Prostate gland (tissue), 2 donors: ENCODE measurements at regions of chr16 and their contacts with region 1.

Region 1: DNA sequence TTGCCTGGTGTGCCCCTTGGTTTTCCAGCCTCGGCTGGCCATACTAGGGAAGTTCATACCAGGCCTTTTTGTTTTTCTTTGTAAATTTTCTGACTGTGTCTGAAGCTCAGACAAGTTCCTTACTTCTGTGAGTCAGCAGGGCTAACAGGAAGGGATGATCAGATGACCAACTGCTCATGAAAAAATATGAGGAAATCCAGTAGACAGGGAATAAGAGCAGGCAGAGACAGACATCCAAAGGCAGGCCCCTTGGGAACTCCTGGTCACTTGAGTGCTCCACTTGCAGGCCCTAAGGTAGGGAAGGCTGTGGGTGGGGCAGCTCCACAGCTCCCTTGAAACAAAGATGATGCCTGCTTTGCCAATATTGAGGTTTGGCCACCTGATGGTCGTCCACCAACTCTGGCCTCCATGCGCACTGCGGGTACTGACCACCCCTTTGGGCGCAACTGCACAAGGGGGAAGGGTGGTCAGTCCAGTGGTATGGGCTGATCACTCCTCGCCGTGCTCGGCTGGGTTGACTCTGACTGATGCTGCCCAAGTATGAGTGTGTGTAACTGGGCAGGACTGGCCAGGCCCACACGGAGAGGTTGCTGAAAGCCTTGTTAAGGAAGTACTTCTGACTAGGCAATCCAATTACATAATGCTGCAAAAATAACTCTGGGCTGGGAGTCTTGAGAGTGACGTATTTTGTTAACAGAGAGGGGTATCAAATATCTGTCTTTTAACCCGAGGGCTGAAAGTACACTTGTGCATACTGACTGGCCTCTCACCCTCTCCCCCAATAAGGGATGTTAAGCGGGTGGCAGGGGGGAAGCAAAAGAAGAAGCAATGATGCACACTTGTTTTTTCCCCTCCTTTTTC is 20.8 kb upstream of the ZFHX3 start:
- DNase-seq: no peak
- H3K4me3 ChIP-seq: no peak overlapping the region
- H3K27ac ChIP-seq: peak overlapping the region; percentile 72 to 79
- H3K4me1 ChIP-seq: peaks cover 8% of the 10 kb centered on the region
- H3K27me3 ChIP-seq: no peaks in the 10 kb centered on the region
- CTCF ChIP-seq: no peak
- POLR2A ChIP-seq: peak; percentile 40

Region 2: DNA sequence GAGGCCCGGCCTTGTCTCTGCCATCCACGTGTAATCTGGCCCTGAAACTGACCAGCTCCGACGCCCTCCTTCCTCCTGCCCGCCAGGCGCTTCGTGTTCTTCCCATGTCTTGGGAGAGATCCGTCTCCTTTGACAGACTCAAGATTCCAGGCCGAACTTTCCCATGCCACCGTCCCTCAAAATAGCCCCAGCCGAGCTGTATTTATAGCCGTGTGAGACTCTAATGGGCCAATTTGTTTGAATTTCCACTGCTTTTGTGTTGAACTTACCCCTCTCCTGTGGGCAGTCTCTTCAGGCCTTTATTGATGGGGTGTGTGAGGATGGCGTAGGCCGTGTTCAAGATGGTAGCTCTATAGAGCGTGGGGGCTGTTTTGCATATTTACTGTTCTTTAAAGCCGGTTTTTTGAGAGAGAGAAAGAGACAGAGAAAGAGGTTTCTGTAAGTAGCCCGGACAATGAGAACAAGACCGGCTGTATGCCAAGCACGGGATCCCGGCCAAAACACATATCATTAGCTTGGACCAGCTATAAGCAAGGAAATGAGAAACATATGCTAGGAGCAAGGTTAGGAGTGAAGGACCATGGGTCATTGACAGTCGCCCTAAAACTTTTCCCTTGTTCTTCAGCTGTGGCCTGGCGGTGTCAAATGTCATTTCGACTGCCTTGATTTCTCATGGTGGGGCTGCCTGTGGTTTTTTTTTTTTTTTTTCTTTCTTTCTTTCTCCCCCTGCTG is 103.6 kb after region 1 on chr16:
- intact Hi-C with region 1: loop called (anchors 5 kb)
- DNase-seq: peak; percentile 87
- H3K4me3 ChIP-seq: no peak overlapping the region
- H3K27ac ChIP-seq: peak overlapping the region; percentile 8 to 69
- H3K4me1 ChIP-seq: peaks cover 4% of the 10 kb centered on the region
- H3K27me3 ChIP-seq: no peaks in the 10 kb centered on the region
- CTCF ChIP-seq: peak in 2 of 4 experiments; percentile 13 to 27
- POLR2A ChIP-seq: no peak